Activated CD4-positive, alpha-beta T cell treated with anti-CD3 and anti-CD28 coated beads, Interleukin-2, amount 10 ng/mL, durations not matched to agents 7 days and 5 days (primary cell): ENCODE measurements at regions of chr6 and their contacts with region 1.

Region 1: GRCh38 chr6:33248925-33249731 is 22.5 kb downstream of the VPS52 start:
- DNase-seq: peak; percentile 98
- H3K4me3 Mint-ChIP-seq: peak overlapping the region; percentile 86
- H3K27ac Mint-ChIP-seq: peak overlapping the region; percentile 97
- H3K4me1 Mint-ChIP-seq: peaks cover 39% of the 10 kb centered on the region
- H3K27me3 Mint-ChIP-seq: peaks cover 4% of the 10 kb centered on the region

Region 2: DNA sequence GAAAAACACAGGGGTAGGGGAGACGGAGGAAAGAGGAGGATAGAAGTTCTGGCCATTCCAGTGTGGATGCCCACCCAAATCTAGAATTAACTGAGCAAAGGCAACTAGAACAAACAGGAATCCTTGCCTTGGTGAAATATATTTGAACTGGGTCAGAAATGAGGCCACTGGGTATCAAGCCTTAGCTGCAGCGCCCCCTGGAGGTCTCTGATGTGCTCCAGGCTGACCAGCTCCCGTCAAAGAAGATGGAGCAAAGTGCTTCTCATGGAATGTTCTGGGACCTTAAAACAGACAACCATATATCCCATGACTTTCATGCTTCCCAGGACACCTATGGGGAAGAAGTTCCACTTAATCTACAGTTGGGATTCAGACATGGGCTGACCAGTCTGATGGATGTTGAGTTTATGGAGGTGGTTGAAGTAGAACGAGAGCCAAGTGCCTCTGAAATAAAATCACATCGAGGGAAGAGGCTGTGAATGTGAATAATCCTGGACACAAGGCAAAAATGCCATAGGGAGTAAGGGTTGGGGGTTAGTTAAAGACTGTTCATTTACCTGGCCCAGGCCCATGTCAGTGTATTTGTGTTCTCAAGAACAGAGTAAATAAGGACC is 122.9 kb before region 1 on chr6:
- CTCF ChIA-PET with region 1: interaction called, 30 read pairs
- POLR2A ChIA-PET with region 1: no interaction called
- DNase-seq: peak; percentile 62
- H3K4me3 Mint-ChIP-seq: no peak overlapping the region
- H3K27ac Mint-ChIP-seq: no peak overlapping the region
- H3K4me1 Mint-ChIP-seq: peaks cover 11% of the 10 kb centered on the region
- H3K27me3 Mint-ChIP-seq: peaks cover 3% of the 10 kb centered on the region

Region 3: GRCh38 chr6:33208091-33208967 is 40.8 kb before region 1 on chr6 and contains the start of gene RING1:
- CTCF ChIA-PET with region 1: interaction called, 20 read pairs
- POLR2A ChIA-PET with region 1: interaction called, 3 read pairs
- DNase-seq: peak; percentile 87
- H3K4me3 Mint-ChIP-seq: peak within 1 kb of the TSS; percentile 79
- H3K27ac Mint-ChIP-seq: peak within 1 kb of the TSS; percentile 90
- H3K4me1 Mint-ChIP-seq: peaks cover 55% of the 10 kb centered on the region
- H3K27me3 Mint-ChIP-seq: peaks cover 10% of the 10 kb centered on the region
- total RNA-seq, gene RING1: 38.1 to 44.0 TPM

Region 4: GRCh38 chr6:33264015-33264414 is 14.9 kb after region 1 on chr6:
- CTCF ChIA-PET with region 1: interaction called, 24 read pairs
- POLR2A ChIA-PET with region 1: no interaction called
- DNase-seq: no peak
- H3K4me3 Mint-ChIP-seq: no peak overlapping the region
- H3K27ac Mint-ChIP-seq: no peak overlapping the region
- H3K4me1 Mint-ChIP-seq: peaks cover 9% of the 10 kb centered on the region
- H3K27me3 Mint-ChIP-seq: no peaks in the 10 kb centered on the region

Region 5: GRCh38 chr6:33276864-33277662 is 27.9 kb after region 1 on chr6 and contains the start of gene B3GALT4:
- CTCF ChIA-PET with region 1: interaction called, 18 read pairs
- POLR2A ChIA-PET with region 1: interaction called, 7 read pairs
- DNase-seq: peak; percentile 79
- H3K4me3 Mint-ChIP-seq: peak within 1 kb of the TSS; percentile 95
- H3K27ac Mint-ChIP-seq: peak within 1 kb of the TSS; percentile 97
- H3K4me1 Mint-ChIP-seq: peaks cover 69% of the 10 kb centered on the region
- H3K27me3 Mint-ChIP-seq: no peaks in the 10 kb centered on the region
- total RNA-seq, gene B3GALT4: 18.3 to 21.5 TPM

Region 6: DNA sequence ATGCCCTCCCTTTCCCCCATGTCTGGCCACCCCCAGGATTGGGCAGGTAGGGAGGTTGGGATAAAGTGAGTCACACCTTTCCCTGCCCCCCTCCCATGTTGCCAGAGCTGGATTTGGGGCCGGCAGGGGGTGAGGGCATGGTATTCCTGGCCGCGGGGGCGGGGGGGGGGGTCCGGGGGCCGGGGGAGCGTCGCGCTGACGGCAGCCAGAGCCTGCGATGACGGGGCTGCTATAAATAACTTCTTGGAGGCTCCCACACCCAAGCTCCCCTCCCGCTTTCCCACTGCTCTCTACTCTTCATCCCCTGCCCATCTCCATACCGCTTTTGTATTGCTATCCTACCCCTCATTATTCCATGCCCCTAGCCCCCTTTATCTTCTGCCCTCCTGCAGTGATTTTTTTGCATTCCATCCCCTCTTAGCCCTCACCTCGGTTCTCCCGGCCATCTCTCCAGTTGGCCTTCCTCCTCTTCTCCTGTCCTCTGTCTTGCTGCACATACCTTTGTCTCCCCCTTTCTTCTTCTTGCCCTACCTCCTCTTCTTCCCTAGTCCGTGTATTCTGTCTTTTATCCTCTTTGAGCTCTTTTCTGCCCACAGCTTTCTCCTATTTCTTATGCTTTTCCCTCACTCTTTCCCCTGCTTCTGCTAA is 184.5 kb after region 1 on chr6:
- CTCF ChIA-PET with region 1: no interaction called
- POLR2A ChIA-PET with region 1: no interaction called
- DNase-seq: no peak
- H3K4me3 Mint-ChIP-seq: no peak overlapping the region
- H3K27ac Mint-ChIP-seq: no peak overlapping the region
- H3K4me1 Mint-ChIP-seq: peaks cover 48% of the 10 kb centered on the region
- H3K27me3 Mint-ChIP-seq: no peaks in the 10 kb centered on the region